Gastrocnemius medialis (tissue), 4 donors: ENCODE measurements at regions of chr12 and their contacts with region 1.

Region 1: DNA sequence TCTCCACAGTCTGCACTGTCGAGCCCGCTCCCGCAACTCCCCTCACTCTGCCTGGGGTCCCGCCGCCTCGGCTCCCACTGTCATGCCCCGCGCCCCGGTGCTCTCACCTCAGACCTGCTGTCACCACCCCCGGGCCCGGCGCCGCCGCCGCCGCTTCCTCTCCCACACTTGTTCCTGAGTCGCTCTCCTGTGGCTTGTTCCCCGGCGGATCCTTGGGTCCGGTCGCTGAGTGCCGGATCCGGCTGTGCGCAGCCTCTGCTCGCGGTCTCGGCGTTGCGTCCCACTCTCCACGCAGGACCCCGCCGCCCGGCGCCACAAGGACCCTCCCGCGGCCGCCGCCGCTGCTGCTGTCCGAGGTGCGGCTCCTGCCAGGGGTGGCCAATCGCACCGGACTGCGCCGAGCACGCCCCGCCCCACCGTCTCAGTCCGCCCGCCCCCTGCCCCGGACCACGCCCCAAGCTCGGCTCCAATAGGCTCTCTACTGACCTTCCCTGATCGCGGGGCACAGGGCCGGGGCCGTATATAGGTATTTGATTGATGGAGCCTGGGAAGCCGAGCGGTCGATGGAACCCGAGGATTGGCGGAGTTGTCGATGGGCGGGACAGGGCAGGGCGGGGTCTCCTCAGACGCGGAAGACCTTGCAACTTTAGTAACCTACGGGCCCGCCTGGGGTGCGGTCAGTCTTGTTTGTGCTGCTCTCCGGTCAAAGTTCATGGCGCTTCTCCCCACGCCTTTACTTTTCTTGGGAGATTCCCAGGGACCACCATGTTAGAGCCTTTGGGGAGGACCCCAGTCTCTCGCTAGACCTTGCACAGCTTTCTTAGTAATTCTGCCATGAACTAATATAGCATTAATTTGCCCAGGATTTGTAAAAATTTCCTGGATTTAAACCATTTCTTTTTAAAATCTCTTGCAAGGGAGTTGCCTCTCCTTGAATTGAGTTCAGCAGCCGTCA is at the start of gene TAOK3:
- DNase-seq: peak; percentile 99 to 100
- ATAC-seq: peak; percentile 72 to 83
- H3K4me3 ChIP-seq: peak within 1 kb of the TSS; percentile 67 to 99 (median 96)
- H3K27ac ChIP-seq: peak within 1 kb of the TSS; percentile 91 to 98 (median 96)
- H3K4me1 ChIP-seq: peaks cover 42 to 55% of the 10 kb centered on the region in 2 donors
- H3K27me3 ChIP-seq: no peaks in the 10 kb centered on the region
- CTCF ChIP-seq: no peak
- POLR2A ChIP-seq: peak; percentile 94 to 95
- total RNA-seq, gene TAOK3: 13.5 to 24.5 (median 15.1) TPM

Region 2: GRCh38 chr12:118061011-118061875 is 311.6 kb before region 1 on chr12 and contains the start of gene WSB2:
- in situ Hi-C with region 1: no loop called
- intact Hi-C with region 1: loop called (anchors 2 kb)
- DNase-seq: peak; percentile 58 to 67
- ATAC-seq: peak; percentile 65 to 66
- H3K4me3 ChIP-seq: peak within 1 kb of the TSS; percentile 82 to 94 (median 87)
- H3K27ac ChIP-seq: peak within 1 kb of the TSS; percentile 92 to 96 (median 96)
- H3K4me1 ChIP-seq: peaks cover 23 to 30% of the 10 kb centered on the region in 2 donors
- H3K27me3 ChIP-seq: no peaks in the 10 kb centered on the region
- CTCF ChIP-seq: no peak
- POLR2A ChIP-seq: peak; percentile 30 to 45
- total RNA-seq, gene WSB2: 83.5 to 133 (median 93.5) TPM

Region 3: DNA sequence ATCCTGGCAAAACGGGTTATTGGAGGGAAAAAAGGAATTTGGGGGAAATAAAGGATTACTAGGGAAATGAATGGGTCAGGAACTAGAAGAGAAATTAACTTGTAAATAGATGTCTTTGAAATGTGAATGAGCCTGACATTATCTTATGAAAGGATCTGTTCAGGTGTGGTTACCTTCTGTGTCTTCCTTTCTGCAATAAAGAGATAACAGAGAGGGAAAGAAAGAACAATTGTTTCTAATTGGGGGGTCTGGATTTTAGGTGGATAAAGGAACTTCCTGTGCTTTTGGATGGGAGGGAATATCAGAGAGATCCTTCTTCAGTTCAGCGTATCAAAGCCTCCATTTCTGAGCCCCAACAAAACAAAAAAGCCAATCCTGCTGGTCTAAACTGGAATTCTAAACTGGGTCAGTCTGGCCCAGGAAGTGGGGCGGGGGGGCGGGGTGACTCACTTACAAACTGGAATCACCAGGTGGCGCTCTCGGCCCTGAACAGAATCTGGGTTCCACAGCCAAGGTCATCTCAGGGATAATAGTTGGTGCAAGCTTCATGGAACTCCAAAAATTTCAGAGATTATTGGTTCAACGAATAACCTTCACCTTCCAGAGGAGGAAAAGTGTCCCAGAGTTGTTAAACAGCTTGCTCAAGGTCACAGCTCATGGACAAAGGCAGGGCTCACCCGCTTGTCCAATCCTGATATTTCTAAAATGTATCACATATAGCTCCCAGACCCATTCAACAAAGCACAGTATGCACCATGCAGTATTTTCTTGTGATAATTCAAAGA is 252.0 kb before region 1 on chr12:
- in situ Hi-C with region 1: no loop called
- intact Hi-C with region 1: loop called (anchors 1 kb)
- DNase-seq: peak; percentile 48 to 67
- ATAC-seq: peak; percentile 77 to 91
- H3K4me3 ChIP-seq: no peak overlapping the region
- H3K27ac ChIP-seq: peak overlapping the region; percentile 16 to 54 (median 38)
- H3K4me1 ChIP-seq: peaks cover 0 to 9% of the 10 kb centered on the region in 2 donors
- H3K27me3 ChIP-seq: no peaks in the 10 kb centered on the region
- CTCF ChIP-seq: peak; percentile 38 to 83 (median 45)
- POLR2A ChIP-seq: no peak

Region 4: DNA sequence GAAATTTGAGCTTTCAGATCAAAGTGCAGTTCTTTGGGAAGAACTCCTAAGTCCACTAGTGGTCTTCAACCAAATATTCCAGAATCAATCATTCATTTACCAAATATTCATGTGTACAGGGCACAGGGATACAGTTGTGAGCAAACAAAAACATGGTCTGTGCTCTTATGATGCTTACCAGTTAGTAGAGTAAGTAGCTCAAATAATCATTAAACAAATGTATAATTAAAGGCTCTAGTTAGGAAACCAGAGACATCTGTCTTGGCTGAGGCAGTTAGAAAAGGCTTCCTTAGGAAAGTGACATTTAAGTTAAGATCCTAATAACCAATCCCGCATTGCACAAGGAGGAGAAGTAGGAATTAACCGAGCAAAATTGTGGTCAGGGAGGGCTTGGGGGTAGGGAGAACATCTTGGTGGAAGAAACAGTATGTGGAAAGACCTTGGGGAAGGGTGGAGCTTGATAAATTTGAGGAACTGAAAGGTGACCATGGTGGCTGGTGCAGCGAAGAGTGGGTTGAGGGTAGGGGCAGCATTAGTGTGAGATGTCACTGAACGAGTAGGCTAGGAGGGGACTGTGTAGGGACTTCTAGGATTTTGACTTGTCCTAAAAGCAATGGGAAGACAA is 196.9 kb before region 1 on chr12:
- in situ Hi-C with region 1: loop called in 3 of 4 experiments (anchors 5 to 10 kb)
- intact Hi-C with region 1: no loop called
- DNase-seq: no peak
- ATAC-seq: peak in 1 of 2 donors; percentile 36
- H3K4me3 ChIP-seq: no peak overlapping the region
- H3K27ac ChIP-seq: no peak overlapping the region
- H3K4me1 ChIP-seq: no peaks in the 10 kb centered on the region
- H3K27me3 ChIP-seq: no peaks in the 10 kb centered on the region
- CTCF ChIP-seq: no peak
- POLR2A ChIP-seq: no peak

Region 5: GRCh38 chr12:118271790-118272417 is 100.9 kb before region 1 on chr12:
- in situ Hi-C with region 1: no loop called
- intact Hi-C with region 1: no loop called
- DNase-seq: no peak
- ATAC-seq: no peak
- H3K4me3 ChIP-seq: no peak overlapping the region
- H3K27ac ChIP-seq: no peak overlapping the region
- H3K4me1 ChIP-seq: peaks cover 0 to 4% of the 10 kb centered on the region in 2 donors
- H3K27me3 ChIP-seq: no peaks in the 10 kb centered on the region
- CTCF ChIP-seq: no peak
- POLR2A ChIP-seq: no peak

Region 6: GRCh38 chr12:118537481-118537917 is 164.7 kb after region 1 on chr12:
- in situ Hi-C with region 1: no loop called
- intact Hi-C with region 1: loop called (anchors 5 kb)
- DNase-seq: peak; percentile 71 to 87
- ATAC-seq: peak; percentile 96 to 98
- H3K4me3 ChIP-seq: peak overlapping the region in 1 of 4 donors; percentile 3
- H3K27ac ChIP-seq: peak overlapping the region; percentile 97 to 99 (median 98)
- H3K4me1 ChIP-seq: peaks cover 24% of the 10 kb centered on the region in 2 donors
- H3K27me3 ChIP-seq: no peaks in the 10 kb centered on the region
- CTCF ChIP-seq: no peak
- POLR2A ChIP-seq: peak; percentile 26 to 77